ENCODE measurements at regions of chrX and their contacts with region 1.

Region 1: GRCh38 chrX:42900947-42901346 is 123.0 kb upstream of the PPP1R2C start:
- DNase-seq: no peak
- H3K4me3 ChIP-seq: no peak overlapping the region
- H3K27ac ChIP-seq: no peak overlapping the region
- H3K4me1 ChIP-seq: no peaks in the 10 kb centered on the region
- H3K27me3 ChIP-seq: no peaks in the 10 kb centered on the region
- CTCF ChIP-seq: no peak

Region 2: GRCh38 chrX:42028109-42028508 is 872.8 kb before region 1 on chrX:
- intact Hi-C with region 1: loop called (anchors 10 kb)
- DNase-seq: no peak
- H3K4me3 ChIP-seq: no peak overlapping the region
- H3K27ac ChIP-seq: no peak overlapping the region
- H3K4me1 ChIP-seq: no peaks in the 10 kb centered on the region
- H3K27me3 ChIP-seq: no peaks in the 10 kb centered on the region
- CTCF ChIP-seq: no peak

Region 3: GRCh38 chrX:42755820-42756219 is 145.1 kb before region 1 on chrX:
- intact Hi-C with region 1: no loop called
- DNase-seq: peak in 1 of 2 donors; percentile 73
- H3K4me3 ChIP-seq: no peak overlapping the region
- H3K27ac ChIP-seq: peak overlapping the region; percentile 45 to 61
- H3K4me1 ChIP-seq: peaks cover 0 to 3% of the 10 kb centered on the region in 2 donors
- H3K27me3 ChIP-seq: no peaks in the 10 kb centered on the region
- CTCF ChIP-seq: no peak

Region 4: DNA sequence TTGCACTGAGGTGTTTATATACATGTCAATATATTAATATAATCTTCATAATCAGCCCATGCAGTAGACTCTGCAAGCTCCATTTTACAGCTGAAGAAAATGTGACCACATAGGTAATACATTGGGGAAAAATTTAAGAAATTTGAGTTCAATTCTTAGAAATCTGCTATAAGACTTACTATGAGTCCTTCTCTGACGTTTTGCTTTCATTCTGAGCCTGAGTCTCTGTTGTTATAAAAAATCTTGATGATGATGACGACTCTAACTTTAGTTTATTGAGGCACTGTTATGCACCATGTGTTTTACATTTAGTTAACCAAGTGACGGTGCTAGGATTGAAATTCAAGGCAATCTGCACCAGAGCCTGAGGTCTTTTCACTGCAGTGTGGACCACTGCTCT is 247.4 kb after region 1 on chrX:
- intact Hi-C with region 1: no loop called
- DNase-seq: no peak
- H3K4me3 ChIP-seq: no peak overlapping the region
- H3K27ac ChIP-seq: no peak overlapping the region
- H3K4me1 ChIP-seq: no peaks in the 10 kb centered on the region
- H3K27me3 ChIP-seq: no peaks in the 10 kb centered on the region
- CTCF ChIP-seq: no peak